A549 (cell line): ENCODE measurements at regions of chr5 and their contacts with region 1.

Region 1: GRCh38 chr5:141564216-141564692 is 54.5 kb downstream of the DIAPH1 start:
- DNase-seq: peak; percentile 50 to 95
- ATAC-seq: peak; percentile 76 to 93
- H3K4me3 ChIP-seq: no peak overlapping the region
- H3K27ac ChIP-seq: no peak overlapping the region
- H3K4me1 ChIP-seq: no peaks in the 10 kb centered on the region
- CTCF ChIP-seq: peak; percentile 94
- EP300 ChIP-seq: no peak
- POLR2A ChIP-seq: no peak
- RAD21 ChIP-seq: peak; percentile 55 to 69; a peak in 4 of 5 replicates

Region 2: DNA sequence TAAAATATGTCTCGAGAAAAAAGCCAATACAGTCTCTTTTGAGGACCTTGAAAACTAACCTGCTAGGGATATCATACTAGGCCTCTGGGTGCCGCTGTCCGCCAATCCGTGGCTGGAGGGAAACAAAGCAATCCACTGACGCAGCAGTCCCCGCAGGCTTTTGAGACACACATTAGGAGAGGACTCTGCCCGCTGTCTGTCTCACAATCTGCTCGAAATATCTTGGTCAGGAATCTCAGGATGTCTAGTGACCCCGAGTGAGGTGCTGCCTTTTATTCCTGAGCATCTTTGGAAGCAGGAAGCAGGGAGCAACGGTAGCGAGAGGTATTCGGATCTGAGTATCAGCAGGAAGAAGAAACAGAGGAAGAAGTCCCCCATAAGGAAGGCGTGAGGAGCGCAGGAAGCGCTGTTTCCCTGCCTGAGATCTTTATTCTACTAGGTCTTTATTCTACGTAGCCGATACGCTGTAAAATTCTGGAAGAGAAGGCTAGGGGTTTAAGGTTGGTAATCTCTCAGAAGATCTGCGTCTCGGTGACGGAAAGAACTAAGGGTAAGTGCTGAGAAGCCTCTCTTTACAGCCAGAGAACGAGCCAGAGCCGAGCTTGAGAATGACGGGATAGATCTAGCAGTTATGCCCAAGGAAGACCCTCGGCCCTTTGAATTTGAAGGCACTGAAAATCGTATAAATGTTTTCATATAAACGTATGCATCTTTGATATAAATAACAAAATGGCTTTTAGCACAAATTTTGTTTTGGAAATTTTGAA is 238.0 kb before region 1 on chr5:
- CTCF ChIA-PET with region 1: interaction called, 13 read pairs
- POLR2A ChIA-PET with region 1: interaction called, 3 read pairs
- DNase-seq: peak in 1 of 2 experiments; percentile 51
- ATAC-seq: peak in 1 of 2 experiments; percentile 75; a peak in 3 of 6 replicates
- H3K4me3 ChIP-seq: 0 out of 3 replicates have a peak overlapping the region, but pooled peaks have one; percentile 14
- H3K27ac ChIP-seq: no peak overlapping the region
- H3K4me1 ChIP-seq: no peaks in the 10 kb centered on the region
- CTCF ChIP-seq: peak; percentile 9; the same call in 1 of the 3 replicates
- EP300 ChIP-seq: no peak
- POLR2A ChIP-seq: no peak
- RAD21 ChIP-seq: 0 out of 5 replicates have a peak, but pooled peaks of 1 of the 2 experiments have one; percentile 25

Region 3: GRCh38 chr5:141363952-141364660 is 200.1 kb before region 1 on chr5 and contains the start of gene PCDHGA5:
- CTCF ChIA-PET with region 1: interaction called, 15 read pairs
- POLR2A ChIA-PET with region 1: no interaction called
- DNase-seq: peak in 1 of 2 experiments; percentile 46
- ATAC-seq: peak; percentile 70 to 87; a peak in 4 of 6 replicates
- H3K4me3 ChIP-seq: peak within 1 kb of the TSS; percentile 36; the same call in 2 of the 3 replicates
- H3K27ac ChIP-seq: 0 out of 6 replicates have a peak within 1 kb of the TSS, but pooled peaks of 1 of the 2 experiments have one; percentile 6
- H3K4me1 ChIP-seq: no peaks in the 10 kb centered on the region
- CTCF ChIP-seq: peak; percentile 27; the same call in 2 of the 3 replicates
- EP300 ChIP-seq: no peak
- POLR2A ChIP-seq: no peak
- RAD21 ChIP-seq: peak in 1 of 2 experiments; percentile 27; a peak in 2 of 5 replicates
- polyA plus RNA-seq, gene PCDHGA5: 0.37 and 0.57 TPM in 2 replicates

Region 4: GRCh38 chr5:141402553-141403260 is 161.5 kb before region 1 on chr5 and contains the start of gene PCDHGA9:
- CTCF ChIA-PET with region 1: interaction called, 23 read pairs
- POLR2A ChIA-PET with region 1: no interaction called
- DNase-seq: no peak
- ATAC-seq: no peak
- H3K4me3 ChIP-seq: no peak within 1 kb of the TSS
- H3K27ac ChIP-seq: no peak within 1 kb of the TSS
- H3K4me1 ChIP-seq: no peaks in the 10 kb centered on the region
- CTCF ChIP-seq: no peak
- EP300 ChIP-seq: no peak
- POLR2A ChIP-seq: no peak
- RAD21 ChIP-seq: no peak
- polyA plus RNA-seq, gene PCDHGA9: 0.22 and 0.40 TPM in 2 replicates

Region 5: DNA sequence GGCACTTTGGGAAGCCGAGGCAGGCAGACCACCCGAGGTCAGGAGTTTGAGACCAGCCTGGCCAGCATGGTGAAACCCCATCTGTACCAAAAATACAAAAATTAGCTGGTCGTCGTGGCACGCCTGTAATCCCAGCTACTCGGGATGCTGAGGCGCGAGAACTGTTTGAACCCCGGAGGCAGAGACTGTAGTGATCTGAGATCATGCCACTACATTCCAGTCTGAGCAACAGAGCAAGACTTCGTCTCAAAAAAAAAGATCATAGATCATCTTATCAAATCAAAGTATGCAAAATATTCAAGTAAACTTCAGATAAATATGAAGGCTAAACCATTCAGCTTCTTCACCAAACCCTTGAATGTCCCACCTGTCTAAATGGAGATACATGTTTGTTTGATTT is 94.4 kb before region 1 on chr5:
- CTCF ChIA-PET with region 1: no interaction called
- POLR2A ChIA-PET with region 1: no interaction called
- DNase-seq: no peak
- ATAC-seq: no peak
- H3K4me3 ChIP-seq: no peak overlapping the region
- H3K27ac ChIP-seq: no peak overlapping the region
- H3K4me1 ChIP-seq: no peaks in the 10 kb centered on the region
- CTCF ChIP-seq: no peak
- EP300 ChIP-seq: no peak
- POLR2A ChIP-seq: no peak
- RAD21 ChIP-seq: no peak

Region 6: GRCh38 chr5:141547488-141547887 is 16.8 kb before region 1 on chr5:
- CTCF ChIA-PET with region 1: interaction called, 11 read pairs
- POLR2A ChIA-PET with region 1: no interaction called
- DNase-seq: peak in 1 of 2 experiments; percentile 67
- ATAC-seq: no peak
- H3K4me3 ChIP-seq: no peak overlapping the region
- H3K27ac ChIP-seq: no peak overlapping the region
- H3K4me1 ChIP-seq: no peaks in the 10 kb centered on the region
- CTCF ChIP-seq: no peak
- EP300 ChIP-seq: no peak
- POLR2A ChIP-seq: no peak
- RAD21 ChIP-seq: no peak